Activated B cell treated with CpG ODN at 0.5 μM for 24 hours (primary cell): ENCODE measurements at regions of chr16 and their contacts with region 1.

Region 1: GRCh38 chr16:78962457-78962929 is 638.0 kb downstream of the MAF start:
- DNase-seq: no peak
- ATAC-seq: peak; percentile 84
- H3K4me3 Mint-ChIP-seq: peak overlapping the region; percentile 59
- H3K27ac Mint-ChIP-seq: peak overlapping the region; percentile 79
- H3K4me1 Mint-ChIP-seq: peaks cover 54% of the 10 kb centered on the region
- H3K27me3 Mint-ChIP-seq: peaks cover 8% of the 10 kb centered on the region
- CTCF ChIP-seq: no peak

Region 2: DNA sequence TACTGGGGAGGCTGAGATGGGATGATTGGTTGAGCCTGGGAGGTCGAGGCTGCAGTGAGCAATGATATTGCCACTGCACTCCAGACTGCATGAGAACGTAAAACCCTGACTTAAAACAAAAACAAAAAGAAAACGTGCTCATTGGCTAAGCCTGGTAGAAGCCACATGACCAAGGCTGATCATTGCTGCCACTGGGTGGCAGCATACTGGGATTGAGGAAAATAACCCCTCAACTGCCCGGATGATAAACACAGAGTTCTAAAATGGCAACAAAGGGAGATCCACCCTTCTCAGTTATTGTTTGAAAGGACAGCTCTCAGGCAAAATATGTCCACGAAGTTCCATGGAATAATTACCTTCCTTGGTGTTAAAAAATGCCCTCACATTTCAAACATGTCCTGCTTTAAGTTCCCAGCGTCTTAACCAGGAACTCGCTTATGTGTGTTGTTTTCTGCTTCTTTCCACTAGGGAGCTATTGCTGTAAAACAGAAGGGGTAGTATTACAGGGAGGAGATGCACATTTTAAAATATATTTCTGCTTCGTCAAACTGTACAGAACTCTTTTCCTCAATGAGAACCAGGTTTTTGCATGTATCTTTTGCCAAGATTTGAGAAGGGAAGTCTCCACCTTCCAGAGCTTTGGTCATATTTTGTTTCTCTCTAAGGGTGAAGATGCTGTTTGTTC is 37.3 kb before region 1 on chr16:
- CTCF ChIA-PET with region 1: no interaction called
- POLR2A ChIA-PET with region 1: no interaction called
- intact Hi-C with region 1: loop called (anchors 1 kb)
- DNase-seq: no peak
- ATAC-seq: no peak
- H3K4me3 Mint-ChIP-seq: no peak overlapping the region
- H3K27ac Mint-ChIP-seq: no peak overlapping the region
- H3K4me1 Mint-ChIP-seq: no peaks in the 10 kb centered on the region
- H3K27me3 Mint-ChIP-seq: no peaks in the 10 kb centered on the region
- CTCF ChIP-seq: no peak

Region 3: DNA sequence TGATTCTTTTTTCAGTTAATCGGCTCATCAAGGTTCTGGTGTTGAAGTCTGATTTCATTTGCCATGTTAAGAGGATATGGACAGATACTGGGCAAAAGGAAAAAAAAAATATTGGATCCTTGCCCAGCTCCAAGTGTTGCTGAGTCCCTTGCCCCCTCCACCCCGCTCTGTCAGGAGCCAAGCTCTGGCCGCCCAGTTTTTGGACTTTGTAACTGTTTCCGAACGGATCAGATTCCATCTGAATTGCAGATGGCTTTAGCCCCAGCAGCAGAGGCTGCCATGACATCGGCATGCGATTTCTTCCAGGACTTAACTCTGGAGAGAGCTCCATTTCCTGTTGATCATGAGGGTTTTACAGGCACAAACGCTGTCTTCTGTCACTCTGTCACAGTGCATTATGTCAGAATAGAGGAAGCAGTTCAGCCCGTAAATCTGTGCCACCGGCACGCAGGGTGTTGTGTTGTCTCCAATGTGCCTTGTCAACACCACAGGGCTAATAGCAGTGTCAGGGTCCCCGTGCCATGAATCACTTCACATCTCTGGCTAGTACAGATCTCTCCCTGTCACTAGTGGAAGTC is 22.5 kb after region 1 on chr16:
- CTCF ChIA-PET with region 1: interaction called, 5 read pairs
- POLR2A ChIA-PET with region 1: interaction called, 48 read pairs
- intact Hi-C with region 1: loop called (anchors 1 kb)
- DNase-seq: no peak
- ATAC-seq: no peak
- H3K4me3 Mint-ChIP-seq: no peak overlapping the region
- H3K27ac Mint-ChIP-seq: no peak overlapping the region
- H3K4me1 Mint-ChIP-seq: peaks cover 14% of the 10 kb centered on the region
- H3K27me3 Mint-ChIP-seq: no peaks in the 10 kb centered on the region
- CTCF ChIP-seq: no peak

Region 4: DNA sequence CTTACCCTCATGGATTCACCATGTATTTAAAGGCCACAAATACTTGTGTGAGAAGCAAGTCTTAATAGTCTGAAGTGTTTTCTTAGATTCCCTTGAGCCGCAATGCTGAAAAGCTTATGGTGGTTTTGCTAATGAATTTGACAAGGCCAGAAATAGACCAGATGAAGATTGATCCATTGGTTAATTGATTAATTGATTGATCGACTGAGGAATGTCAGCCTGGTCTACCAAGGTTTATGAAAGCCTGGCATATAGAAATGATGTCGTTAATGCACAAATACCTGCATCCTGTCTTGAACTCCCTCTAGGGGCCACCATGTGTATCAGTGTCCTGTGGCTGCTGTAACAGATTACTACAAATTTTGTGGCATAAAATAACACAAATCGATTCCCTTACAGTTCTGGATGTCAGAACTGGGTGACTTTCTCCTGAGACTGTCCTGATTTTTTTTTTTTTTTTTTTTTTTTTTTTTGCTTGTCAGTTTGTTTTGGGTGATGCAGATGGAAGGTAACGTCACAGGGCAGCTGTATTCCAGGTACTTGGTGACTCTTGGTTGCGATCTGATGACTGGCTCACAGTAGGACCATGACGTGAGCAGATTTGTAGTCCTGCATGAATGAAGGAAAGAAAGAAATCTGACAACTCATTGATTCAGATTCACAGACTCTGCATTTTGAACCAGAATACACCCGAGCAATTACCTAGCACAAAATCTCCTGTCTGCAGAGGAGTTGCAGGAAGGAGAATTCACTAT is 84.9 kb after region 1 on chr16:
- CTCF ChIA-PET with region 1: no interaction called
- POLR2A ChIA-PET with region 1: no interaction called
- intact Hi-C with region 1: loop called (anchors 10 kb)
- DNase-seq: no peak
- ATAC-seq: peak; percentile 50
- H3K4me3 Mint-ChIP-seq: no peak overlapping the region
- H3K27ac Mint-ChIP-seq: no peak overlapping the region
- H3K4me1 Mint-ChIP-seq: no peaks in the 10 kb centered on the region
- H3K27me3 Mint-ChIP-seq: no peaks in the 10 kb centered on the region
- CTCF ChIP-seq: peak; percentile 47

Region 5: DNA sequence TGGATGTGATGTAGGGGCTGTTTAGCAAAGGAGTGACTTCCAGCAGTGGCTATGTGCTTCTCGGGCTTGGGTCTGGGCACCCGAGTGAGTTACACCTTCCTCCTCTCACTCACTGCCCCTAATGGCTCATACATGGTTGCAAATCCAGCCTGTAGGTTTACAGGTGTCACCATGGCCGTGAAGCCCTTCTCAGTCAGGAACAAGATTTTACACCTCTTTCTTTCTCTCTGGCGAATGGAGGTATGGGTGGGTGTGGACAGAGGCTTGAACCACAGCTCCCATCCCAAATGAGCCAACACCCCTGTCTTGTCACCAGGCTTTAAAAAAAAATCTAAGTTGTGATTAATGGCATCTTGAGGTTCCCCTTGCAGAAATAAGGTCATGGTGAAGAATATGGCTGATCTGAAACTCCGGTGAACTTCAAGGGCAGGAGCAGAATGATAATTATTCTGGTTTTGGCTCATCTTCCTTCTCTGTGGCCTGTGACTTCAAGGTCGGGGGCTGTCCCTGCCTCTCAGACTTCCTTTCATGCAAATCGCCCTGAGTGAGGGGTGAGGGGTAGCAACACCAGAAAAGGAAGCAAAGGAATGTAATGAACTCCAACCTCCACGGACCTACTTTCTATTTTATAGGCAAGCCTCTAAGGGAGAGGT is 306.8 kb after region 1 on chr16:
- CTCF ChIA-PET with region 1: no interaction called
- POLR2A ChIA-PET with region 1: interaction called, 4 read pairs
- intact Hi-C with region 1: loop called (anchors 1 kb)
- DNase-seq: no peak
- ATAC-seq: peak; percentile 92
- H3K4me3 Mint-ChIP-seq: peak overlapping the region; percentile 30
- H3K27ac Mint-ChIP-seq: peak overlapping the region; percentile 51
- H3K4me1 Mint-ChIP-seq: peaks cover 33% of the 10 kb centered on the region
- H3K27me3 Mint-ChIP-seq: peaks cover 26% of the 10 kb centered on the region
- CTCF ChIP-seq: no peak